A673 (cell line): ENCODE measurements at regions of chr5 and their contacts with region 1.

Region 1: GRCh38 chr5:98827161-98827560 is 53.7 kb downstream of the RGMB start:
- DNase-seq: peak; percentile 56
- H3K4me3 ChIP-seq: no peak overlapping the region
- H3K27ac ChIP-seq: no peak overlapping the region
- H3K4me1 ChIP-seq: no peaks in the 10 kb centered on the region
- H3K27me3 ChIP-seq: no peaks in the 10 kb centered on the region
- CTCF ChIP-seq: peak; percentile 64

Region 2: GRCh38 chr5:97297063-97297703 is 1530.0 kb before region 1 on chr5:
- CTCF ChIA-PET with region 1: no interaction called
- POLR2A ChIA-PET with region 1: no interaction called
- intact Hi-C with region 1: loop called (anchors 10 kb)
- DNase-seq: peak; percentile 68
- H3K4me3 ChIP-seq: no peak overlapping the region
- H3K27ac ChIP-seq: no peak overlapping the region
- H3K4me1 ChIP-seq: no peaks in the 10 kb centered on the region
- H3K27me3 ChIP-seq: peaks cover 4% of the 10 kb centered on the region
- CTCF ChIP-seq: peak; percentile 62

Region 3: DNA sequence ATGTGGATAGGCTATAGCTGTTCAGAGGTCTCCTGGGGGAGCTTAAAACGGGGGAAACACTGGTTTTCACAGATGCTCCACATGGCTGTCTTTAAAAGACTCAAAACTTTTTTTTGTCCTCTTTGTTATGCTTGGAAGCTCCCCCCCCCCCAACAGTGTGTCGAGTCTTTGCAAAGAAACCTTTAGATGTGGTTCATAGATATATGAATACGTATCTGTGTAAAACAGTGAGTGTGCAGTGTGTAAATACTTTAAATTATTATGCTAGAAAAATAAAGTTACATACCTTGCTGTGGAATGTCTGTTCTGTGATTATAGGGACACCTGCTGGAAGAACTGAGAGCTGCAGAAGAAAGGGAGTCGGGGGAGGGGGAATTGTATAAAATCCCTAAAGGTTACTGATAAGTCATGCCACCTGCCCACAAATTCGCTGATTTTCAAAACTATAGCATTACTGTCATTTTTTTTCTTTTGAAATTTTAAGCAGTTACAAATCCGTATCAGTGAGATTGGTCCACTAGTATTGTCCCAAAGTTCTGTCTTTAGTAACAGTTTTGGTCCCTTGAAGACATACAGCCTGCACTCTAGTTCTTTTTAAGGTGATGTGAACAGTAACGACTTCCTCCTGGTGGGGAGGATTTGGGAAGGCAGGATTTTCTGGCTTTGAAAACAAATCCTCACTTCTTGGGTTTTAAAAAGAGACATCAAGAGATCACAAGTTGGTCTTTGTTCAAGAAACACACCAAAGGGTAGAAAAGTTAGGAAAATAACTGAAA is 30.8 kb before region 1 on chr5:
- CTCF ChIA-PET with region 1: interaction called, 10 read pairs
- POLR2A ChIA-PET with region 1: no interaction called
- intact Hi-C with region 1: no loop called
- DNase-seq: peak; percentile 70
- H3K4me3 ChIP-seq: no peak overlapping the region
- H3K27ac ChIP-seq: no peak overlapping the region
- H3K4me1 ChIP-seq: peaks cover 23% of the 10 kb centered on the region
- H3K27me3 ChIP-seq: no peaks in the 10 kb centered on the region
- CTCF ChIP-seq: peak; percentile 81